ENCODE measurements at regions of chr20 and their contacts with region 1.

Region 1: DNA sequence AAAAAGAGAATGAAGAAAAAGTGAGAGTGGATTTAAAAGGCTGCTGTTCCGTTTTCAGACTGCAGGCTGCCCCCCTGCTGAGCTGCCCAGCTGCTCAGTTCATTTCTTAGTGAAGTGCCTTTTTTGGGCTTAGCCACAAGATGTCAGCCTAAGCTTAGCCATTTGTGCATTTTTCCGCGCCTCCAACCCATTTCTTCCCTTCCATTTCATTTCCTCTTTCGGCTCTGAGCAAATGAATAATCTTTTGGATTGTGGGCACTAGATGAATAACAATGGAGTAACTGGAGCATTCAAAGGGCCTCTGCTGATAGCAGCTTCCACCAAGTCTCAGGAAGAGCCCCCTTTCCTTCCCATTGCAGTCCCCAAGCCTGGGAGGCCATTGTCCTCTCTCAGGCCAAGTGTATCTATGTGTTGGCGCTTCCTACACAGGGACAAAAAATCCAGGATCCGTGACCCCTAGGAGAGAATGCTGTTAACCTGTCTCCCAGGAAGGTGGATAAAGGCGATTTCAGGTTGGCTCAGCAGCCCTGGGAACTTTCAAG is 83.5 kb upstream of the SPTLC3 start:
- DNase-seq: no peak
- H3K4me3 Mint-ChIP-seq: no peak overlapping the region
- H3K27ac Mint-ChIP-seq: no peak overlapping the region
- H3K4me1 Mint-ChIP-seq: peaks cover 13% of the 10 kb centered on the region
- H3K27me3 Mint-ChIP-seq: peaks cover 4% of the 10 kb centered on the region

Region 2: DNA sequence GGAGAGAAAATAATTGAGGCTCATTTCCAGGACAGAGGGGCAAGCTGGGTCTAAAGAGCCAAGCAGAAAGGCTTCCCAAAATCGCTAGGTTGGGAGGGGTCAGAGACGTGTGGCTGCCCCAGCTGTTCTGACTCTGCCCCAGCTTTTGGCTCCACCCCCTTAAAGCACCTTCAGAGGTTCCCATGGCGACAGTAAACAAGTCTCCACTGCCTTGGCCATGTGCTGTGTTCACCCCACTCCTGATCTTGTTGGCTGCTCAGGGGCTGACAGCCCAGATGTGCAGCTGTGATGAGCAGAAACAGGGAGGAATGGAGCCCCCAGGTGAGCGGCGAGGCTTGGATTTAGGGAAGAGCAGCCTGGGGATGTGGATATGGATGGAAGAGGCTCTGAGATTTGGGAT is 10.8 kb after region 1 on chr20:
- intact Hi-C with region 1: no loop called
- DNase-seq: no peak
- H3K4me3 Mint-ChIP-seq: no peak overlapping the region
- H3K27ac Mint-ChIP-seq: no peak overlapping the region
- H3K4me1 Mint-ChIP-seq: peaks cover 3% of the 10 kb centered on the region
- H3K27me3 Mint-ChIP-seq: peaks cover 4% of the 10 kb centered on the region

Region 3: DNA sequence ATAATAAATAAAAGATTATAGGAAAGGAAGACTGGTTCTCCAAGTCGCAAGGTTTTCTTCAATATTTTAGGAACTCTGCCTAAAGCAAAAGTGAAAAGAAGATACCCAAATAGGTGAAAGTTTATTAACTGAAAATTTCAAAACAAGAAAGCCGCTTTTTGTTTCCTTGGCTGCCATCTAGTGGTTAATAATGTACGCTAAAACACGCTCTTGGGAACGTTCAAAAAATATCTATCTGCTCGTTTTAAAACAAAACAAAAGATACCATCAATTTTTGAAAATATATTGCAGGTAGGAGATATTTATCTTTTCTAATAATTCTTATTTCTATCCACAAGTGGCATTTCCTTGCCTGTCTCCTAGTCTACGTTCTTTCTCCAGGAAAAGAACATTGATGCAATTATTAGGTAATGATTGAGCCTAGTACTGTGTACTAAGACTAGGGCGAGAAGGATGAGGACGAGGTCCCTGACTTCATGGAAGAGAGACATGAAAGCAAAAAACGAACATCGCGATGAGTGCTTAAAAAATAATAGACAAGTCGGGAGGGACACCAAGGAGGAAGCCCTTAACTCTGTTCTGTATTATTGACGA is 180.7 kb after region 1 on chr20:
- intact Hi-C with region 1: loop called (anchors 1 kb)
- DNase-seq: no peak
- H3K4me3 Mint-ChIP-seq: no peak overlapping the region
- H3K27ac Mint-ChIP-seq: no peak overlapping the region
- H3K4me1 Mint-ChIP-seq: no peaks in the 10 kb centered on the region
- H3K27me3 Mint-ChIP-seq: peaks cover 3% of the 10 kb centered on the region

Measured in activated T-helper 2 cell treated with anti-CD3 and anti-CD28 coated beads, Interferon-gamma antibody, Interleukin-2, Interleukin-4, amounts not matched to agents 10 μg/mL and 5 μg/mL and 100 μg/mL, durations not matched to agents 14 hours and 24 hours and 36 hours (primary cell).